Keratinocyte (primary cell): ENCODE measurements at regions of chr14 and their contacts with region 1.

Region 1: GRCh38 chr14:61218767-61219166 is 62.4 kb downstream of the TMEM30B start:
- DNase-seq: no peak
- H3K4me3 ChIP-seq: no peak overlapping the region
- H3K27ac ChIP-seq: no peak overlapping the region
- H3K4me1 ChIP-seq: no peaks in the 10 kb centered on the region
- H3K27me3 ChIP-seq: peaks cover 19% of the 10 kb centered on the region
- CTCF ChIP-seq: no peak

Region 2: GRCh38 chr14:60648934-60649874 is 569.6 kb before region 1 on chr14 and contains the start of gene SIX1:
- dilution Hi-C with region 1: loop called (anchors 25 kb)
- DNase-seq: no peak
- H3K4me3 ChIP-seq: peak within 1 kb of the TSS; percentile 36 to 60 (median 56)
- H3K27ac ChIP-seq: no peak within 1 kb of the TSS
- H3K4me1 ChIP-seq: peaks cover 14% of the 10 kb centered on the region
- H3K27me3 ChIP-seq: peaks cover 97% of the 10 kb centered on the region
- CTCF ChIP-seq: no peak
- polyA plus RNA-seq, gene SIX1: 0.01 to 0.04 TPM in 2 of 3 replicates, not detected in the other